ENCODE measurements at regions of chr10 and their contacts with region 1.

Region 1: GRCh38 chr10:14822879-14823755 is 14.7 kb downstream of the CDNF start:
- DNase-seq: no peak
- ATAC-seq: no peak
- H3K4me3 ChIP-seq: no peak overlapping the region
- H3K27ac ChIP-seq: no peak overlapping the region
- H3K4me1 ChIP-seq: no peaks in the 10 kb centered on the region
- H3K27me3 ChIP-seq: no peaks in the 10 kb centered on the region
- CTCF ChIP-seq: peak in 2 of 5 experiments; percentile 28 to 33
- POLR2A ChIP-seq: no peak

Region 2: DNA sequence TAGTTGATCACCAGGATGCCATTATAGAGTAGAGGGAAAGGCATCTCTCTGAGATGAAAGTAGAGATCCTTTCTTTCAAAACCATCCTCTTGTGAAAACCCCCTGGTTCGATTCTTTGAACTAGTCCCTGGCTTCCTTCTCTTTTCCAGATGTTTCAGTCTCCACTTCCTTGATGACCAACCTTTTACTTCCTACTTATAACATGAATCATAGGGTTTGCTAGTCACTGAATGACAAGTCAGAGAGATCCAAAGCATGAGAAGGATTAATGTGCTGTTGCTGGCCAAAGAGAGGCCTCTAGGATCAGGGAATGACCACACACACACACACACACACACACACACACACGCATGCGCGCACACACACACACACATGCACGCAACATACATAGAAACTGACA is 331.3 kb before region 1 on chr10:
- in situ Hi-C with region 1: no loop called
- intact Hi-C with region 1: loop called (anchors 10 kb)
- DNase-seq: no peak
- ATAC-seq: no peak
- H3K4me3 ChIP-seq: no peak overlapping the region
- H3K27ac ChIP-seq: no peak overlapping the region
- H3K4me1 ChIP-seq: no peaks in the 10 kb centered on the region
- H3K27me3 ChIP-seq: peaks cover under 1 to 6% (median 2%) of the 10 kb centered on the region in 3 donors
- CTCF ChIP-seq: no peak
- POLR2A ChIP-seq: no peak

Region 3: DNA sequence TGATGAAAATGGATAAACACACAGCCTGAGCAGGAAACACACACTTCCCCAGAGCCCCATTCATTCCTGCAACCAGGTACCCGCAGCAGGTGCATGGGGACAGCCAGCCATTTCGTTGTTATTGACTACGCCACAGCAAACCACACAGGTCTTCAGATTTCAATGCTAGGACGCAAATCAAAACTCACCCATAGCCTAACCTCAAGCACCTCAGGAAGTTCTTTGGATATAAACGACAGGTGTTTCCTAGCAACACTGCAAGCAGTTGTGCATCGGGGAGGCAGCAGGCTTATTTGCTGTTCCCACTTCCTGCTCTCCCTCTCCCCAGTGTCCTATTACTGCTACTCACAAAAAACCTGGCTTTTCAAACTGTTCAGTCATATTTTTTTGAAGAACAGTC is 315.9 kb before region 1 on chr10:
- in situ Hi-C with region 1: loop called in 1 of 4 experiments (anchors 10 kb)
- intact Hi-C with region 1: no loop called
- DNase-seq: no peak
- ATAC-seq: no peak
- H3K4me3 ChIP-seq: no peak overlapping the region
- H3K27ac ChIP-seq: no peak overlapping the region
- H3K4me1 ChIP-seq: no peaks in the 10 kb centered on the region
- H3K27me3 ChIP-seq: no peaks in the 10 kb centered on the region
- CTCF ChIP-seq: no peak
- POLR2A ChIP-seq: no peak

Region 4: GRCh38 chr10:14588084-14588937 is 234.8 kb before region 1 on chr10:
- in situ Hi-C with region 1: no loop called
- intact Hi-C with region 1: no loop called
- DNase-seq: no peak
- ATAC-seq: peak in 1 of 2 donors; percentile 36
- H3K4me3 ChIP-seq: no peak overlapping the region
- H3K27ac ChIP-seq: peak overlapping the region in 1 of 4 donors; percentile 34
- H3K4me1 ChIP-seq: no peaks in the 10 kb centered on the region
- H3K27me3 ChIP-seq: no peaks in the 10 kb centered on the region
- CTCF ChIP-seq: no peak
- POLR2A ChIP-seq: no peak

Region 5: GRCh38 chr10:14859775-14860174 is 36.7 kb after region 1 on chr10:
- in situ Hi-C with region 1: no loop called
- intact Hi-C with region 1: no loop called
- DNase-seq: no peak
- ATAC-seq: no peak
- H3K4me3 ChIP-seq: no peak overlapping the region
- H3K27ac ChIP-seq: no peak overlapping the region
- H3K4me1 ChIP-seq: peaks cover 0 to 7% of the 10 kb centered on the region in 2 donors
- H3K27me3 ChIP-seq: no peaks in the 10 kb centered on the region
- CTCF ChIP-seq: no peak
- POLR2A ChIP-seq: no peak

Region 6: DNA sequence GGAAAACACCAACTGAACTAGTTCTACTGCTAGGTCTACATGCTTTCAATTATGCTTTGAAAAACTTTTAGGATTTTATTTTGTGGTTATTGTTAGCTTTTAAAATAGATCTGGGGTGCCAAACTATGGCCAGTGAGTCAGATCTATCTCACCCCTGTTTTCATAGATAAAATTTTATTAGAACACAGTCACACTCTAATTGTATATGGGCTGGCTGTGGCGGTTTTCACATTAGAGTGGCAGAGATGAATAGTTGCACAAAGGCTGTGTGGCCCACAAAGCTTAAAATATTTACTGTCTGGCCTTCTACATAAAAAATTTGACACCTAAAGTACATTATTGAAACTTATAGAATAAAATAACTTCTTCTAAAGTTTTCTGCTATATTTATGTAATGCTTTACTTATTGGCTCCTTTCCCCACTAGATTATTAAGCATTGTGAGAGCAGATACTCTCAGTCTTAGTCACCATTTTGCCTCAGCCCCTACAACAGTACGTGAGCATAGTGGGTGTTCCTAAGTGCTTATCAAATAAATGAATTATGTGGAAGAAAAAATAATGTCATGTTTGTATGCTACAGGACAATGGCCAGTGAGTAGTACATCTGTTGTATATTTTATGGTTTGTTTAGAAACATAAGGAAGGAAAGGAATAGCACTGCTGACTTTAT is 50.1 kb after region 1 on chr10:
- in situ Hi-C with region 1: no loop called
- intact Hi-C with region 1: no loop called
- DNase-seq: no peak
- ATAC-seq: no peak
- H3K4me3 ChIP-seq: no peak overlapping the region
- H3K27ac ChIP-seq: no peak overlapping the region
- H3K4me1 ChIP-seq: peaks cover 19 to 25% of the 10 kb centered on the region in 2 donors
- H3K27me3 ChIP-seq: no peaks in the 10 kb centered on the region
- CTCF ChIP-seq: no peak
- POLR2A ChIP-seq: no peak

Region 7: DNA sequence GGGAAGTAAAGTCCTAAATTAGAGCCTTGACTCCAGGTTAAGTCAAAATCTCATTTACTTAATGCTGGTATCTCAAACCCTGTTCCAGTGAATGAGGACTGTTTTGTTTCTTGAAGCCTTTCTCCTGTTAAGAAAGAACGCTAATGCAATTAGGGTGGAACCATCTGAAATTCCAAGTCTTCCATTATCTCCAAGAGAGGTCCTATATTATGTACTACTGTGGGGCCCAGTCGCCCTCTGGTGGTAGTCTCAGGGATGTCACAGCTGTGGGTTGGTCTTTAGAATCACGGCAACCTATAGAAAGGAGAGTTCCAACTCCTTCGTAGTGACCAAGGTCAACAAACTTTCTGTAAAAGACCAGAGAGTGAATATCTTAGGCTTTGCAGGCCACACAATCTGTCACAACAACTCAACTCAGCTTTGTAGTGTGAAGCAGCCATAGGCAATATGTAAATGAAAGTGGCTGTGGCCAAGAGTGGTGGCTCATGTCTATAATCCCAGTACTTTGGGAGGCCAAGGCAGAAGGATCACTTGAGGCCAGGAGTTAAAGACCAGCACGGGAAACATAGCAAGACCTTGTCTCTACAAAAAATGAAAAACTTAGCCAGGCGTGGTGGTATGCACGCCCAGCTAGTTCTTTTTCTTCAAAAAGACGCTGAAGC is 283.4 kb after region 1 on chr10:
- in situ Hi-C with region 1: no loop called
- intact Hi-C with region 1: no loop called
- DNase-seq: peak in 1 of 2 donors; percentile 38
- ATAC-seq: peak; percentile 76 to 91
- H3K4me3 ChIP-seq: no peak overlapping the region
- H3K27ac ChIP-seq: no peak overlapping the region
- H3K4me1 ChIP-seq: peaks cover 0 to 4% of the 10 kb centered on the region in 2 donors
- H3K27me3 ChIP-seq: no peaks in the 10 kb centered on the region
- CTCF ChIP-seq: peak; percentile 69 to 88 (median 79)
- POLR2A ChIP-seq: no peak